ENCODE measurements at regions of chr1 and their contacts with region 1.

Region 1: DNA sequence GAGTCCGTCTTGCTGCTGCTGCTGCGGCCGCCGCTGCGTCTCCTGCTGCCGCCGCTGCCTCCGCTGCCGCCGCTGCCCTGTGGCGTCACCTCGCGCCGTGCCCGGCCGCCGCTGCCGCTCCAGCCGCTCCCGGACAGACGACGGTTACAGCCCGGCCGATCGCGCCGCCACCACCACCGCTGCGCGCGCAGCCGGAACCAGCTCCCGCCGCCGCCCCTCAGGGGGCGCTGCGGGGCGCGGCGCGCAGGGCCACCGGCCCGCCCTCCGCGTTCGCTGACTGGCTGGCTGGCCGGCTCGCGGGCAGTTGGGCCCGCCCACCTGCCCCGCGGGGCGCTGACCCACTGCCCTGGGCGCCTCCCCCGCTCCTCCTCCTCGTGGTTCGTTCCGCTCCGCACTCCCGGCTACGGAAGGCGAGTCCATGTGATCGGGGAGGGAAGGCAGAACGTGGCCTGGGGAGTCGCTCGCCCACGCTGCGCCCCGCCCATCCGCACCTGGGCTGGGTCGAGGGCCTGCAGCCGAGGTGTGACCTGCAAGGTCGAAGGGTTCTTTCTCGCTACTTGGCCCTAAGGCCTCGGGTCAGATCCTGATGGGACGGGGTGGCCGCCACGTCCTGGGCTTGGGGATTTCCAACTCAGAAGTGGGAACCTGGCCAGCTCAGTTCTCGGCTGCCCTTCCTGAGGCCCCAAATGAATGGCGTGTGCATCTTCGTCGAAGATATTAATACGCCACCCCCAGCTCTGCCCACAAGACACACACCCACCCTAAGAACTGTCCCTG is at the start of gene PTP4A2:
- DNase-seq: peak; percentile 79 to 89 (median 80)
- H3K4me3 ChIP-seq: peak within 1 kb of the TSS; percentile 43 to 95
- H3K4me3 Mint-ChIP-seq: peak within 1 kb of the TSS; percentile 92 to 100 (median 98)
- H3K27ac ChIP-seq: peak within 1 kb of the TSS; percentile 70
- H3K27ac Mint-ChIP-seq: peak within 1 kb of the TSS; percentile 96 to 98 (median 97)
- H3K4me1 ChIP-seq: peaks cover 77% of the 10 kb centered on the region
- H3K4me1 Mint-ChIP-seq: peaks cover 43 to 88% (median 62%) of the 10 kb centered on the region in 4 donors
- H3K27me3 ChIP-seq: no peaks in the 10 kb centered on the region
- H3K27me3 Mint-ChIP-seq: no peaks in the 10 kb centered on the region
- total RNA-seq, gene PTP4A2: 254 to 276 TPM

Region 2: DNA sequence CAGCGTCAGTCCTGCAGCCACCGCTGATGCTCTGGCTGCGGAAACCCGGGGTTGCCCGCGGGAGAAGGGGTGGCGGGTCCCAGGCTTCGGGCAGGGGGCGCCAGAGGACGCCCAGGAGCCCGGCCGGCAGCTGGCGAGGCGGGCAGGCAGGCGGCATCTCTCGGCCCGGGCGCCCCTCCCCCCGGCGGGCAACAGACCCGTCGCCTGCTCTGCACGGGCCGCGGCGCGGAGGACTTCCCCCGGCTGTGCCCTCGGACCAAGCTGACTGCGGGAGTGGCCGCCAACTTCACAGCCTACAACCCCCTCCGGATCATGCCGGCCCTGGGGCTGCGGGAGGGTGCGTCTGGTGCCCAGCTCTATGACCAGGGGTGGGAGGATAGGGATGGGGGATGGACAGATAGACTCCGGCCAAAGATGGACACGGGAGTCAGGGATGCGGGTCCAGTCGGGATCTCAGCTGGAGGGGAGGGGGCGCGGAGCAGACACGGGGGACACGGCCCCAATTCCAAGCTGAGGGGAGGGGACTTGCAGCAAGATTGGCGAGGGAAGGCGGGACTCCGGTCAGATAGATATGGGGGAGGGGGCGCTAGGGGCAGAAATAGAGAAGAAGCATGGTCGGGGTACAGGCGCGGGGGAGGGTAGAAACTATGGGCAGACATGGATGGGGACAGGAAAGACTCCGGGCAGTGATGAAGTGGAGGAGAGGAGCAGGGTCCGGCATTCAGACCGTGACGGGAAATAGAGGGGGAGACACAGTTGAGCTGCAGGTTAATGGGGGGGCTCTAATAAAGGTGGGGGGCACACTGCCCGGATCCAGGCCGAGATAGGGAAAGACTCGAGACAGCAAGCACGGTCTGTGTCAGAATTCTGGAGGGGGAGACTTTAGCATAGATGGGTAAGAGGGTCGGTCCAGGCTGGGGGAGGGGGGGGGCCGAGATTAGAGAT is 175.4 kb before region 1 on chr1:
- CTCF ChIA-PET with region 1: no interaction called
- POLR2A ChIA-PET with region 1: interaction called, 3 read pairs
- intact Hi-C with region 1: loop called (anchors 5 kb)
- DNase-seq: peak; percentile 65 to 71 (median 65)
- H3K4me3 ChIP-seq: peak overlapping the region; percentile 51 to 61
- H3K4me3 Mint-ChIP-seq: peak overlapping the region; percentile 55 to 88 (median 82)
- H3K27ac ChIP-seq: no peak overlapping the region
- H3K27ac Mint-ChIP-seq: peak overlapping the region in 3 of 7 donors; percentile 32 to 67 (median 48)
- H3K4me1 ChIP-seq: peaks cover 35% of the 10 kb centered on the region
- H3K4me1 Mint-ChIP-seq: peaks cover 11 to 39% (median 17%) of the 10 kb centered on the region in 4 donors
- H3K27me3 ChIP-seq: peaks cover 10% of the 10 kb centered on the region
- H3K27me3 Mint-ChIP-seq: peaks cover 0 to 2% of the 10 kb centered on the region in 2 donors

Region 3: GRCh38 chr1:31848381-31848897 is 89.9 kb before region 1 on chr1:
- CTCF ChIA-PET with region 1: no interaction called
- POLR2A ChIA-PET with region 1: interaction called, 13 read pairs
- intact Hi-C with region 1: no loop called
- DNase-seq: peak; percentile 47 to 66 (median 65)
- H3K4me3 ChIP-seq: peak overlapping the region; percentile 7 to 51
- H3K4me3 Mint-ChIP-seq: peak overlapping the region; percentile 61 to 88 (median 78)
- H3K27ac ChIP-seq: peak overlapping the region; percentile 16
- H3K27ac Mint-ChIP-seq: peak overlapping the region; percentile 65 to 96 (median 90)
- H3K4me1 ChIP-seq: peaks cover 48% of the 10 kb centered on the region
- H3K4me1 Mint-ChIP-seq: peaks cover 43 to 62% (median 51%) of the 10 kb centered on the region in 4 donors
- H3K27me3 ChIP-seq: no peaks in the 10 kb centered on the region
- H3K27me3 Mint-ChIP-seq: no peaks in the 10 kb centered on the region

Region 4: GRCh38 chr1:31955917-31956736 is 17.8 kb after region 1 on chr1:
- CTCF ChIA-PET with region 1: interaction called, 208 read pairs
- POLR2A ChIA-PET with region 1: interaction called, 545 read pairs
- intact Hi-C with region 1: loop called (anchors 1 kb)
- DNase-seq: peak; percentile 72 to 93 (median 76)
- H3K4me3 ChIP-seq: no peak overlapping the region
- H3K4me3 Mint-ChIP-seq: peak overlapping the region in 7 of 8 donors; percentile 70 to 86 (median 78)
- H3K27ac ChIP-seq: peak overlapping the region; percentile 78
- H3K27ac Mint-ChIP-seq: peak overlapping the region; percentile 91 to 96 (median 93)
- H3K4me1 ChIP-seq: peaks cover 70% of the 10 kb centered on the region
- H3K4me1 Mint-ChIP-seq: peaks cover 49 to 85% (median 63%) of the 10 kb centered on the region in 4 donors
- H3K27me3 ChIP-seq: no peaks in the 10 kb centered on the region
- H3K27me3 Mint-ChIP-seq: no peaks in the 10 kb centered on the region

Region 5: GRCh38 chr1:32013386-32014198 is 75.2 kb after region 1 on chr1 and contains the start of gene KHDRBS1:
- CTCF ChIA-PET with region 1: interaction called, 3 read pairs
- POLR2A ChIA-PET with region 1: interaction called, 12 read pairs
- intact Hi-C with region 1: loop called (anchors 2 kb)
- DNase-seq: peak; percentile 98 to 99 (median 99)
- H3K4me3 ChIP-seq: peak within 1 kb of the TSS; percentile 89 to 100
- H3K4me3 Mint-ChIP-seq: peak within 1 kb of the TSS; percentile 89 to 99 (median 98)
- H3K27ac ChIP-seq: peak within 1 kb of the TSS; percentile 95
- H3K27ac Mint-ChIP-seq: peak within 1 kb of the TSS; percentile 97 to 99 (median 98)
- H3K4me1 ChIP-seq: peaks cover 37% of the 10 kb centered on the region
- H3K4me1 Mint-ChIP-seq: peaks cover 20 to 38% (median 30%) of the 10 kb centered on the region in 4 donors
- H3K27me3 ChIP-seq: no peaks in the 10 kb centered on the region
- H3K27me3 Mint-ChIP-seq: no peaks in the 10 kb centered on the region
- total RNA-seq, gene KHDRBS1: 114 to 122 TPM